K562 (cell line): ENCODE measurements at regions of chr12 and their contacts with region 1.

Region 1: GRCh38 chr12:40921563-40922163 is 229.4 kb downstream of the CNTN1 start:
- DNase-seq: peak; percentile 4 to 14 (median 13)
- ATAC-seq: no peak
- H3K4me3 ChIP-seq: no peak overlapping the region
- H3K27ac ChIP-seq: no peak overlapping the region
- H3K4me1 ChIP-seq: no peaks in the 10 kb centered on the region
- H3K27me3 ChIP-seq: no peaks in the 10 kb centered on the region
- CTCF ChIP-seq: peak in 2 of 3 experiments; percentile 12 to 48; a peak in 4 of 6 replicates
- EP300 ChIP-seq: no peak
- POLR2A ChIP-seq: no peak
- RAD21 ChIP-seq: peak; percentile 31 to 65

Region 2: GRCh38 chr12:40152783-40153383 is 768.8 kb before region 1 on chr12:
- CTCF ChIA-PET with region 1: no interaction called
- POLR2A ChIA-PET with region 1: no interaction called
- in situ Hi-C with region 1: loop called (anchors 25 kb)
- intact Hi-C with region 1: loop called (anchors 10 kb)
- DNase-seq: peak in 3 of 4 experiments; percentile 8 to 56 (median 9)
- ATAC-seq: peak; percentile 70; the same call in 1 of the 3 replicates
- H3K4me3 ChIP-seq: no peak overlapping the region
- H3K27ac ChIP-seq: no peak overlapping the region
- H3K4me1 ChIP-seq: no peaks in the 10 kb centered on the region
- H3K27me3 ChIP-seq: no peaks in the 10 kb centered on the region
- CTCF ChIP-seq: peak; percentile 39 to 71 (median 62); a peak in 5 of 6 replicates
- EP300 ChIP-seq: no peak
- POLR2A ChIP-seq: no peak
- RAD21 ChIP-seq: peak; percentile 45 to 59; a peak in 3 of 4 replicates

Region 3: DNA sequence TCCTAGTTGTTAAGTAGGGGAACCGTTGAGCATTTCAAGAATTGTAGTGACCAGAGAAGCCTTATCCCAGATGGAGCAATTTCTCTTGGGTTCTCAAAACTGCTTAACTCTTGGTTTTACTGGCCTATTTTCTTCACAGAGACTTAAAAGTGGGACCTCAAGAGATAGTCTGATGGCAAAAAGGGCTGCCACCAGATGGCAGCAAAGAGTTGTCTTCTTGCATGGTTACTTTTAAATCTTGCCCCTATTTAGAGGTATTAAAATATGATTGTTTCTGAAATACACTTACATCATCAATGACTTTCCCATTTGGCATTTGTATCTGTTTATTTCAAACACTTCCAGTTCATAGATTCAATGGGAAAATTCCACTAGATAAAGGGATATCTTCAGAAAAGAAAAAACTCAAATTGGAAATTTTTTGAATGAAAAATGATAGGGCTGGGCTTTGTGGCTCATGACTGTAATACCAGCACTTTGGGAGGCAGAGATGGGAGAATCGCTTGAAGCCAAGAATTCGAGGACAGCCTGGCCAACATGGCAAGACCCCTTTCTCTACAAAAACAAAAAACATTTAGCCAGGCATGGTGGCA is 299.3 kb before region 1 on chr12:
- CTCF ChIA-PET with region 1: no interaction called
- POLR2A ChIA-PET with region 1: no interaction called
- in situ Hi-C with region 1: no loop called
- intact Hi-C with region 1: loop called (anchors 2 kb)
- DNase-seq: peak; percentile 11 to 54 (median 12)
- ATAC-seq: no peak; the same call in 2 of the 3 replicates
- H3K4me3 ChIP-seq: no peak overlapping the region
- H3K27ac ChIP-seq: no peak overlapping the region
- H3K4me1 ChIP-seq: no peaks in the 10 kb centered on the region
- H3K27me3 ChIP-seq: no peaks in the 10 kb centered on the region
- CTCF ChIP-seq: peak in 2 of 3 experiments; percentile 43 to 46; a peak in 3 of 6 replicates
- EP300 ChIP-seq: no peak
- POLR2A ChIP-seq: no peak
- RAD21 ChIP-seq: peak; percentile 24 to 56; a peak in 2 of 4 replicates

Region 4: DNA sequence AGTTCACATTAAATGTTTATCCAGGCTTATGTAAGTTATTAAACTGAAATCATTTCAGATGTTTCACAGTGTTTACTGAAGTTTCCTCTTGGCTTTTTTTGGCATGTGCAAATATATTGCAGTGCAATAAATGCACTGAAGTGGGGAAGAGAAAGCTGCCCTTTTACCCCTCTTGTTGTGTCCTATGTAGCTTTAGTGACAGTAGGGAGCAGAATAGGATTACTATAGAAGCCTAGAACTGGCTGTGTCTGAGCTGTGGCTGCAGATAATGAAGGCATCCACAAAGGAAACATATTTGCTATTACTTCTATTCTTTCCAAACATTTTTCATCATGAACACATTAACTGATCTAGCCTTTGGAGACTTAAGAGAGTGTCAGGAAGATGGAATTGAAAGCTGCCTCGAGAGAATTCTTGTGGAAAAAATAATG is 253.5 kb before region 1 on chr12:
- CTCF ChIA-PET with region 1: no interaction called
- POLR2A ChIA-PET with region 1: no interaction called
- in situ Hi-C with region 1: no loop called
- intact Hi-C with region 1: no loop called
- DNase-seq: no peak
- ATAC-seq: no peak
- H3K4me3 ChIP-seq: no peak overlapping the region
- H3K27ac ChIP-seq: no peak overlapping the region
- H3K4me1 ChIP-seq: no peaks in the 10 kb centered on the region
- H3K27me3 ChIP-seq: no peaks in the 10 kb centered on the region
- CTCF ChIP-seq: no peak
- EP300 ChIP-seq: no peak
- POLR2A ChIP-seq: no peak
- RAD21 ChIP-seq: no peak

Region 5: GRCh38 chr12:41190338-41190737 is 268.7 kb after region 1 on chr12:
- CTCF ChIA-PET with region 1: no interaction called
- POLR2A ChIA-PET with region 1: no interaction called
- in situ Hi-C with region 1: no loop called
- intact Hi-C with region 1: no loop called
- DNase-seq: peak in 2 of 4 experiments; percentile 2 to 4
- ATAC-seq: no peak
- H3K4me3 ChIP-seq: no peak overlapping the region
- H3K27ac ChIP-seq: no peak overlapping the region
- H3K4me1 ChIP-seq: no peaks in the 10 kb centered on the region
- H3K27me3 ChIP-seq: no peaks in the 10 kb centered on the region
- CTCF ChIP-seq: peak in 1 of 3 experiments; percentile 20; a peak in 2 of 6 replicates
- EP300 ChIP-seq: no peak
- POLR2A ChIP-seq: no peak
- RAD21 ChIP-seq: peak; percentile 17 to 19; a peak in 3 of 4 replicates